ENCODE measurements at regions of chr17 and their contacts with region 1.

Region 1: DNA sequence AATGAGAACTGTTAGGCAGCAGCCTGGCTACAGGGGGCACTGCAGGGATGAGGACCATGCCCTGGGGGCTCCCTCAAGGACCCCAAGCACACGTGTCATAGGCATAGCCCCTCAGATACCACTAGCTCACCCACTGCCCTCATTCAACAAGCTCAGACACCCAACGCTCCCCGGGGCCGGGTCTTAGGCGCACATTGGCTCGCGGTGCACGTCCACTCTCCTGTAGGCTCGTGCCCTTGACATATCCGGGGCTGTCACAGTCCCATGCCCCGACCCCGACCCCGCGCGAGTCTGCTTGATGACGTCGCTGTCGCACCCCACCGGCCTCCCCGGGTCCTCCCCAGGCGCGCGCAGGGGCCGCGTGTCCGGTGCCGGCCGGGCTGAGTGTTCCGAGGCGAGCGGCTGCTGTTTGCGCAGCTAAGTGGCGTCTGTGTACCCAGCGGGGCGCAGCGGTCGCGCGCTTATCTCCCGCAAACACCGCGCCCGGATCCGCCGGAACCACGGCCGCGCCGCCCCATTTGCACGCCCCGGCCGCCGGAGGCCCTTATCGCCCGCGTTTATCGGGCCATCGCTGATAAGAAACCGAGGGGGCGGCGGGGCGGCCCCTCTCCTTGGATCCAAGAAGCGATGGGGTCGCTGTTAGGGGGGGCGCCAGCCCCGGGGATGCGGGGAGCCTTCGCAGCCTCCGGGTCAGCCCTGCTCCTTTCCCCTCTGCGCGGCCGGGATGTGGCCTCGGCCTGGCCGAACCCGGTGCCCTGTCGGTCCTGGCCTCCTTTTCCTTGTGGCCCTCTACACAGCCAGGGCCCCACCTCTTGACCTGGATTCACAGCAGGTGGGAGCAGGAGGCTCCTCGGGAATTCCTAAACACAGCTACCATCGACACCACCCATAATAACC is 20.7 kb upstream of the NAGS start:
- DNase-seq: peak; percentile 50 to 72 (median 57)
- H3K4me3 ChIP-seq: peak overlapping the region in 6 of 7 experiments; percentile 24 to 73 (median 54)
- H3K27ac ChIP-seq: no peak overlapping the region
- H3K4me1 ChIP-seq: peaks cover 0 to 14% (median 5%) of the 10 kb centered on the region in 4 experiments
- H3K27me3 ChIP-seq: peaks cover 2 to 44% (median 39%) of the 10 kb centered on the region in 5 experiments

Region 2: DNA sequence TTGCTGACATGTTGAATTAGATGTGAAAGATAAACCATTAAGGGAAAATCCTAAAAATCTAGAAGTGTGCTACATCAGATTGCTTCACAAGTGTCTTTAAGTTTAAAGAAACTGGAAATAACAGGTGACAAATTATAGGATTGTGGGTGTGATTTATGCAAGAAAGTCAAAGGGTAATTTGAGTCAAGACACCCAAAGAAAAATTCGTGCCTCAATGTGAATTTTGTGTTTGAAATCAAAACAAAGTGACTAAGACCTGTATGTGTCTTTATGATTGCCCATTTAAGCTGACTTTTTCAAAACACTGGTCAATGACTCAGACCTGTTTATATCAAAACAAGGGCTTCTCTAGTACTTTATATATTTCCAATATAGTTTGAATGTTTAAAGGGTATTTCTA is 24.8 kb before region 1 on chr17:
- CTCF ChIA-PET with region 1: interaction called, 11 read pairs
- POLR2A ChIA-PET with region 1: no interaction called
- DNase-seq: no peak
- H3K4me3 ChIP-seq: no peak overlapping the region
- H3K27ac ChIP-seq: no peak overlapping the region
- H3K4me1 ChIP-seq: no peaks in the 10 kb centered on the region
- H3K27me3 ChIP-seq: peaks cover 0 to 14% (median 9%) of the 10 kb centered on the region in 5 experiments

Region 3: GRCh38 chr17:43994272-43995149 is 10.7 kb after region 1 on chr17:
- CTCF ChIA-PET with region 1: interaction called, 11 read pairs
- POLR2A ChIA-PET with region 1: interaction called, 3 read pairs
- DNase-seq: peak; percentile 69 to 76 (median 70)
- H3K4me3 ChIP-seq: peak overlapping the region in 3 of 7 experiments; percentile 50 to 72 (median 59)
- H3K27ac ChIP-seq: no peak overlapping the region
- H3K4me1 ChIP-seq: peaks cover 0 to 10% (median 6%) of the 10 kb centered on the region in 4 experiments
- H3K27me3 ChIP-seq: peaks cover 0 to 29% (median 13%) of the 10 kb centered on the region in 5 experiments

Region 4: DNA sequence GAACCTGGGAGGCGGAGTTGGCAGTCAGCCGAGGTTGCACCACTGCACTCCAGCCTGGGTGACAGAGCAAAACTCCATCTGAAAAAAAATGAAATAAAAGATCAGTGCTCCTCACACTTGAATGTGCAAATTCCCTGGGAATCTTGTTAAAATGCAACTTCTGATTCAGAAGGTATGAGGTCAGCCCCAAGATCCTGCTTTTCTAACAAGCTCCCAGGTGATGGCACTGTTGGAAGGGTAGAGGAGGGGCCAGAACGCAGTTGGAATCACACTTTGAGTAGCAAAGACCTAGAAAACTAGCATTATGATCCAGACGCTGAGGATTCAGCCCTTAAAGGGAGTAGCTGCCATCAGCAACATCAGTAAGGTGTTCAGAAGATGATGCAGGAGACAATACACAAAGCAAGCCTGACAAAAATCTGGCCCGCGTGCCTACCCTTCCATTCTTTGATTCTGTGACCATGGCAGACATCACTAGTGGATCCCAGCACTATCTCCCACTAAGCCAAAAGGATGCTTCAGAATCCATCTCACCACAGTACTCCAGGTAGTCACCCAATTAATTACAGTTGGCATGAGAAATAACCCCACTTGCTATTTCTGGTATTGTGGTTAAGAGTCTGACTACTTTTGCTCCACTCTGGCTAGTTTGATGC is 639.4 kb after region 1 on chr17:
- CTCF ChIA-PET with region 1: no interaction called
- POLR2A ChIA-PET with region 1: no interaction called
- DNase-seq: no peak
- H3K4me3 ChIP-seq: no peak overlapping the region
- H3K27ac ChIP-seq: no peak overlapping the region
- H3K4me1 ChIP-seq: peaks cover 0 to 3% (median under 1%) of the 10 kb centered on the region in 4 experiments
- H3K27me3 ChIP-seq: peaks cover 0 to 12% (median 0%) of the 10 kb centered on the region in 5 experiments

Measured in common myeloid progenitor, CD34-positive (primary cell).